AG04450 (cell line): ENCODE measurements at regions of chr7 and their contacts with region 1.

Region 1: GRCh38 chr7:20219446-20220292 is 2.5 kb upstream of the MACC1 start:
- DNase-seq: peak; percentile 69
- H3K4me3 ChIP-seq: no peak overlapping the region
- H3K27ac ChIP-seq: peak overlapping the region; percentile 80
- H3K27me3 ChIP-seq: no peaks in the 10 kb centered on the region
- CTCF ChIP-seq: no peak

Region 2: DNA sequence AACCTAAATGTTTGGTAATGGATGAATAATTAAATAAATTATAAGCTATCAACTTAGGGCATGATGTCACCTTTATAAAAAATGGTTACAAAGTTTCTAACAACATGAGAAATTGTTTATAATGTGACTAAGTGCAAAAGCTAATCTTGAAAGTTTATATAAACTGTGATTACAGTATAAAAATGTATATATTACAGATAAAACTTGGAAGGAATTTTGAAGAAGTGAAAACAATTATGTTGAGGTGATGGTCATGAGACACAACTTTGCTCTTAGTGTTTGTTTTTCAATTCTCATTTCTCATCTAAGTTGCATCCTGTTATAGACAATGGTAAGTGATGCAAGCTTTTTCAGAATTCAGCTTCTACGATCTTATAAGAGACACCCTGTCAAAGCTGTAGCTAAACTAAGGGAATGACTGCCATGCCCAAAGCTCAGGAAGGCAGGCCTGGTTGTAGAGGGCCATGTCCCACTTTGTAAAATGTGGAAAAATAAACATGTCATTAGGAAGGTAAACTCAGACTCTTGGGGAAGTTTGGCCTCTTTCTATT is 26.4 kb before region 1 on chr7:
- CTCF ChIA-PET with region 1: no interaction called
- POLR2A ChIA-PET with region 1: interaction called, 11 read pairs
- DNase-seq: peak; percentile 42
- H3K4me3 ChIP-seq: no peak overlapping the region
- H3K27ac ChIP-seq: peak overlapping the region; percentile 68
- H3K27me3 ChIP-seq: no peaks in the 10 kb centered on the region
- CTCF ChIP-seq: no peak

Region 3: GRCh38 chr7:20330240-20330927 is 110.7 kb after region 1 on chr7 and contains the start of gene ITGB8:
- CTCF ChIA-PET with region 1: no interaction called
- POLR2A ChIA-PET with region 1: interaction called, 26 read pairs
- DNase-seq: peak; percentile 84
- H3K4me3 ChIP-seq: peak within 1 kb of the TSS; percentile 87
- H3K27ac ChIP-seq: peak within 1 kb of the TSS; percentile 99
- H3K27me3 ChIP-seq: no peaks in the 10 kb centered on the region
- CTCF ChIP-seq: no peak
- polyA plus RNA-seq, gene ITGB8: 9.1 and 12.3 TPM in 2 replicates